Lower lobe of right lung (tissue), 2 donors: ENCODE measurements at regions of chr3 and their contacts with region 1.

Region 1: DNA sequence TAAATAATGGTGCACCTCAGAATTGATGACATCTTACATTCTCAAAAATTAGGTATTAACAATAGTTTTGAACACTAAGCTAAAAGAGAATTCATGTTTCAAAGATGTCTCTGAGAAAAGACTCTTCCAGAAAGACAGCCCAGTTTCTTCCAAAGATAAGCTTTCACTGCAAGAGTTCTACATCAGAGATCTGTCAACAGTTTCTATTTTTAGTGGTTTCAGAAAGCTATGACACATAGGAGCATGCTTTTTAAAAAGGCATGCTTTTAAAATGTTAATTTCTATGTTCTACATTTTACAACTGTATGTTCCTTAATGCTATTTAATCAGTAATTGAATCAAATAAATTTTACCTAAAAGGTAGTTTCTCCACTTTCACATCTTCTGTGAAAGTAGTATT is 88.2 kb downstream of the PLOD2 start:
- DNase-seq: no peak
- ATAC-seq: no peak
- H3K4me3 ChIP-seq: no peak overlapping the region
- H3K27ac ChIP-seq: no peak overlapping the region
- H3K4me1 ChIP-seq: no peaks in the 10 kb centered on the region
- H3K27me3 ChIP-seq: no peaks in the 10 kb centered on the region
- CTCF ChIP-seq: no peak

Region 2: DNA sequence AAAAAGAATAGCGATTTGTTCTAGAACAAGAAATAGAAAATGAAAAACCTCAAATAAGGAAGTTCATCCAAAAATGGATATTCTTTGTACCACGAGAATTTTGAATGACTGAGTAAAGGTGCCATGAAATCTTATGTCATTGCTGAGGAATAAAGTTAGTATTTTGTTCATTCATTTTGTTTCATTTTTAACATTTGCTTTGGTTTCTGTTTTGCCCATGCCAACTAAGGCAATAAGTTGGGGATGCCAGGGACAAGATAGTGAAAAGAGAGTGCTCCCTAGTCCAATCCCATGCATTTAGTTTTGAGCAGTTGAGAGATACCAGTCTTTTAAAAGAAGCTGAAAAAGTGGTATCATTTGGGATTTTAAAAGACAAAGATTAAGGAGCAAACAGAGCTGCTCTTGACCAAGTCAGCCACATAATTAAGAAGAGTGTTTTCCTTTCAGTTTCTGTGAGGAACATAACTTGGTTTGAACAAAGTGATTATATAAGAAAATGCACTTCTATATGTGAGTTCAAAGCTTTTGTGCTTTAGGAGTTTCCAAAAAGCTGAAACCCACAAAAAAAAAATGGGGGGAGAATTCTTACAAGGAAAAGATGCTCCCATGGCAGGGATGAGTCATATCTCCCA is 113.3 kb before region 1 on chr3:
- intact Hi-C with region 1: no loop called
- DNase-seq: no peak
- ATAC-seq: no peak
- H3K4me3 ChIP-seq: no peak overlapping the region
- H3K27ac ChIP-seq: no peak overlapping the region
- H3K4me1 ChIP-seq: no peaks in the 10 kb centered on the region
- H3K27me3 ChIP-seq: no peaks in the 10 kb centered on the region
- CTCF ChIP-seq: no peak

Region 3: GRCh38 chr3:146326670-146327543 is 254.1 kb after region 1 on chr3:
- intact Hi-C with region 1: loop called (anchors 10 kb)
- DNase-seq: no peak
- ATAC-seq: peak; percentile 45 to 76
- H3K4me3 ChIP-seq: no peak overlapping the region
- H3K27ac ChIP-seq: no peak overlapping the region
- H3K4me1 ChIP-seq: no peaks in the 10 kb centered on the region
- H3K27me3 ChIP-seq: no peaks in the 10 kb centered on the region
- CTCF ChIP-seq: peak; percentile 58